ENCODE measurements at regions of chr12 and their contacts with region 1.

Region 1: DNA sequence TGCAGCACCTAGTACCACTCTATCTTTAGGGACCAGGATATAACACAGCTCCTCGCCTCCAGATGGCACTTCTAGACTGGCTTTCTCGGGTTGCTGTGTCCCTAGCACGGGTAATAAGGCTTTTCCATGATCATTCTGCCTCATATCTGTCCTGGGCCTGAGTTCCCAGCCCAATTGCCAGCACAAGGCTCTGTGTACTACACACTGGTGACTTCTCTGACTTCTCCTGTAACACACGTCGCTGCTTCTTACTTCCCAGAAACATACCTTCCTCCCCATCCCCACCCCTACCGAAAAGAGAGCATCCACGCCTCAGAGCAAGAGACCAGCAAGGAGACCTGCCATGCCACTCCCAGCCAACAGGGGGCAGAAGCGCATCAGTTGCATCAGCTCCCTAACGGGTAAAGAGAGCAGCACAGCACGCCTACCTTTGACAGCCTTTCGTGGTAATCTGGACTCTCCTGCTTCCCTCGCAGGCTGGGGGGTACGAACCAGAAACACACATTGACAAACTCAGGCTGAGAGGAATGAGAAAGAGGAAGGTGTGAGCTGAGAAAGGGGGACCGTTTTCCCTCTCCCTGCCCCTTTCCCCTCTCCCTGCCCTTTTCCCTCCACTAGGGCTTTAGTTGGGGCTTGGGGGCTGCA is 21.2 kb upstream of the ZNF740 start:
- DNase-seq: peak; percentile 89
- ATAC-seq: peak; percentile 95
- H3K4me3 ChIP-seq: peak overlapping the region in 1 of 2 experiments; percentile 7; a peak in 1 of 4 replicates
- H3K27ac ChIP-seq: peak overlapping the region; percentile 69; the same call in 1 of the 2 replicates
- H3K4me1 ChIP-seq: no peaks in the 10 kb centered on the region
- H3K27me3 ChIP-seq: no peaks in the 10 kb centered on the region
- CTCF ChIP-seq: peak; percentile 99

Region 2: DNA sequence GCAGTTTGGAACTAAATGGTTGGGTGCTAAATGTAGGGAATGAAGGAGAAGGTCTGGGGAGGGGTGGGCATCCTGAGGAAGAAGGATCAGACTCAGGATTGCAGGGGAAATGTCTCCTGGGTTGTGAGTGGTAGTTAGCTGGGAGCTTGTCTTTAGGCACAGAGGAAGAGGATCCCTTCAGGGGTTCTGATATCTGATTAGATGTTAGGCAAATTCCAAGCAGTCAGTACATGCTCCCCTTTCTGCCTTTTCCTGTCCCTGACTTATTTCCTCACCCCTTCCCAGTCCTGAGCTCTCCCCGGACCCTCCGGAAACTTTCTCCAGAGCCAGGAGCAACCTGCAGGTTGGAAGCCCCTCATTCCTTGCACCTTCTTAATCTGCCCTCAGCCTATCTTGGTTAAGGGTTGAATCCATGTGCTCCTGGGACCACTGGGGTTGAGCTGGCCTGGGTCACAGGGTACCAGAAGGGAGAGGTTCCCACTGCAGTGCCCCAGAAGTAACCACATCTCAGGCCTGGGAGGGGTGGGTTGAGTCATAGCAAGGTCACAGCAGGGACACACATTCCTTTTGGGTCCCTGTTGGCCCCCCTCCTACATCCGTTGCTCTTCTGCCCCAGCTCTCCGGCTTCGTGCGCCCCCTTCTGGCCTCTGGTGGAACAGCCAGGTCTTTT is 60.2 kb before region 1 on chr12:
- CTCF ChIA-PET with region 1: no interaction called
- POLR2A ChIA-PET with region 1: no interaction called
- in situ Hi-C with region 1: no loop called
- intact Hi-C with region 1: no loop called
- DNase-seq: peak; percentile 70
- ATAC-seq: peak; percentile 64
- H3K4me3 ChIP-seq: peak overlapping the region in 1 of 2 experiments; percentile 52; a peak in 2 of 4 replicates
- H3K27ac ChIP-seq: no peak overlapping the region
- H3K4me1 ChIP-seq: peaks cover 17% of the 10 kb centered on the region
- H3K27me3 ChIP-seq: no peaks in the 10 kb centered on the region
- CTCF ChIP-seq: peak; percentile 98

Region 3: DNA sequence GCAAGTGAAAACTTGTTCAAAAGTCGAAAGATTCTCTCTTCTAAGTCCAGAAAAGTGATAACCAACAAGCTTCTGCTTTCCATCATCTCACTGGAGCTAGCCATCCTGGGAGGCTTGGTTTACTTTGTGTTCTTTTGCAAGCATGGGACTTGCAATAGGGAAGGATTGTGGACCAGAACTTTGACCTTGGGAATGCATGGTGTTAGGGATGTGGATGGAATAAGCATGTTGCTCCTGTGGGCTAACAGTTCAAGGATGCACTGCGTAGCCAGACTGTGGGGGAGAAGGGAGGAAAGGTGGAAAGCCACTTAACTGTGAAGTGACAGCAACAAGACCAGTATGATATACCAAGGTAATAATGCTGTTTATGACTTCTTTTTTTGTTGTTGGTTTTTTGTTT is 27.5 kb before region 1 on chr12:
- CTCF ChIA-PET with region 1: no interaction called
- POLR2A ChIA-PET with region 1: no interaction called
- in situ Hi-C with region 1: no loop called
- intact Hi-C with region 1: loop called (anchors 1 kb)
- DNase-seq: no peak
- ATAC-seq: no peak
- H3K4me3 ChIP-seq: no peak overlapping the region
- H3K27ac ChIP-seq: no peak overlapping the region
- H3K4me1 ChIP-seq: no peaks in the 10 kb centered on the region
- H3K27me3 ChIP-seq: peaks cover 5% of the 10 kb centered on the region
- CTCF ChIP-seq: no peak

Region 4: GRCh38 chr12:53190108-53190729 is 30.9 kb after region 1 on chr12:
- CTCF ChIA-PET with region 1: interaction called, 15 read pairs
- POLR2A ChIA-PET with region 1: no interaction called
- in situ Hi-C with region 1: no loop called
- intact Hi-C with region 1: no loop called
- DNase-seq: no peak
- ATAC-seq: peak; percentile 83
- H3K4me3 ChIP-seq: no peak overlapping the region
- H3K27ac ChIP-seq: peak overlapping the region; percentile 0; the same call in 1 of the 2 replicates
- H3K4me1 ChIP-seq: no peaks in the 10 kb centered on the region
- H3K27me3 ChIP-seq: no peaks in the 10 kb centered on the region
- CTCF ChIP-seq: peak; percentile 89

Region 5: DNA sequence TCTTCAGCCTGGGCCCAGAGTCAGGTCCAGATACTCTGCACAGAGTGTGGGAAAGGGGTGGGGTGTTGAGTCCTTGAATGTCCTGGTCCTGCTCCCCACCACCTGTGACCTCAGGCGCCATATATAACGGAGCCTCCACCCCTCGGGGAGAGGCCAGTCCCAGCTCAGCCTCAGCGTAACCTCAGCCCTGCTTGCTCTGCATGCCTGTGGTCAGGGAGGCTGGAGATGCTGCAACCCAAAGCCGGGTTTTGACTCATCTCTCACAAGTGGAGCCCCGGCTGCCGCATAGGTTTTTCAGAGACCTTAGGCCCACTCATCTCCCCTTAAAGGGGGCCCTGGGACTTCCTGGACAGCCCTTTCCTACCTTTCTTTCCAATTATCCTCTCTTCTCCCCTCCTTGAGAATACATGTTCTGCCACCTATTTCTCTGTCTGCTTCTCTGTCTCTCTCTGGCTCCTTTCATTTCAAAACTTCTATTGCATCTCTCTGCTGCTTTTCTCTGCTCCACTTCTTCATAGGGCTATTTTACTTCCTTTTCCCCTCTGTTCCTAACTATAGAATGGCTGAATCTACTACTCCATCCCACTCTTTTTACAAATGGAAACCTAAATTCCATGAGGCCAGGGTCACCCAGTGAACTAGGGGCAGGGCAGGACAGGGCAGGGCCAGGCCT is 46.6 kb after region 1 on chr12:
- CTCF ChIA-PET with region 1: no interaction called
- POLR2A ChIA-PET with region 1: no interaction called
- in situ Hi-C with region 1: no loop called
- intact Hi-C with region 1: no loop called
- DNase-seq: no peak
- ATAC-seq: peak; percentile 59; the same call in 1 of the 2 replicates
- H3K4me3 ChIP-seq: no peak overlapping the region
- H3K27ac ChIP-seq: no peak overlapping the region
- H3K4me1 ChIP-seq: no peaks in the 10 kb centered on the region; the same call in 1 of the 2 replicates
- H3K27me3 ChIP-seq: no peaks in the 10 kb centered on the region
- CTCF ChIP-seq: no peak